Cardiac septum (tissue), 1 donor: ENCODE measurements at regions of chr17 and their contacts with region 1.

Region 1: DNA sequence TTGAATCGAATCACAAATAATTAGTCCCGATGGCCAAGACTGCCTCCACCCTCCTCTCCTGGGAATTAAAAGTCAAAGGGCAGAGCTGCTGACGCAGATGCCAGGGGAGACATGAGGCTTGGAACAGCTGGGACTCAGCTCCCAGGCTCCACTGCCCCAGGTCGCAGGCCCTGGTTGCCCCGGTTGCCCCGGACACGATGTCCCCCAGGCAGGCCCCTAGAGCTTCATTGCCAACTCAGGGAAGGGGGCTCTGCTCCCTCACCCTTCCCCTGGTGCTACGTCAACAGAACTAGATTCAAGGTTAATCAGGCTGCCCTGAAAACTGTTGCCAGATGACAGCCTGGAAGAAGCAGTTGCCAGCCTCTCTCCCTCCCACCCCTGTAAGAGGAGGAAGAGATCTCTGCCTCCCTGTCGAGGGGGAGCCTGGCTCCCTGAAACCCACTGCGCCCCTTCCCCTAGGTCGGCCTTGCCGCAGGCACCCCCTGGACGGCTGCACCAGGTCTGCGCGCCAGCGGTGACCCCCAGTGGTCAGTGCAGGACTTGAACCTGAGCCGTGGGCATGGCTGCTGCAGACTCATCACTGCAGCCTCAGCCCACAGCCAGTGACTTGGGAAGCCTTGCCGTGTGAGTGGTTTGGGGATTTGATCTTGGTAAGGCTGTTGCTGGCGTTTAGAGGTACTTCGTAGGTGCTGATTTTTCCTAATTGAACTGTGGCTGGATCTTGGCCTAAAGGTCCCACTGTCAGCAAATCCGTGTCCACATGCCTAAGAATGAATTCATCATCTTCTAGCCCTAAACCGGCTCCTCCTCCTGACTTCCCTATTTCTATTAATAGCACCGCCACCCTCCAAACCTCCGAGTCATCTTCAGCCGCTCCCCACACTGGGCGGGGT is 84.1 kb upstream of the TOB1 start:
- DNase-seq: peak; percentile 91

Region 2: GRCh38 chr17:50853015-50853615 is 97.1 kb before region 1 on chr17:
- intact Hi-C with region 1: loop called (anchors 2 kb)
- DNase-seq: no peak

Region 3: DNA sequence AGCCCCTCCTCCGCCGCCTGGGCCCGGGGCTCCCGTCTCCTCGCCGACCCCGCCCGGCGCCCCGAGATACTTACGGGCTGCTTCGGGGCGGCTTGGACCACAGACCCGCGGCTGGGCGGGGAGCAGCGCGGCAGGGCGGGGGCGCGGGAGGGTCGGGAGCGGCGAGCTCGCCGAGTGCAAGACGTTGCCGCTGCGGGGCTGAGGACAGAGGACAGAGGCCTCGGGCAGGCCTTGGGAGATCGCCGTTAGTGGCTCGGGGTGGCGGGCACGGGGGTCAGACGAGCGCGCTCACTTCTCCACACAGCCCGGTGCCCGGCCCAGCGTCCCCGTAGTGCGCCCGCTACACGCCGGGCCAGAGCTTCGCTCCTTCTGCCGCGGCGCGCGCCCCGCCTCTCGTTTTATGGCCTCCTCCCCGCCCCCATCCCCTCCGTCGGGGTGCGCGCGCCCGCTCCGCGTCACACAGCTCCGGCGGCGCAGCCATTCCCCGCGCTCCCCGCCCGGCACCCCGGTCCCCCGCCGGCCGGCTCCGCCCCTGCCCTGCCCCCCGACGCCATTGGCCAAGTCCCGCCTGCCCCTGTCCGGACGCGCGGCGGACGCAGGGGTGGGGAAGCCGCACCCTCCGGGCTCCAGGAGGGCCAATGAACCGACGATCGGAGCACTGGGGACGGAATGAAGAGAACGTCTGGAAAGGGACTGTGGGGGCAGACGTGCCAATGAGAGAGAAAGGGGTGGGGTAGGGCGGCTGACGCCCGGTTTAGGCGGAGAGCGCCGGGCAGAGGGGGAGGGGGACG is 84.1 kb before region 1 on chr17 and contains the start of gene TOB1:
- intact Hi-C with region 1: loop called (anchors 2 kb)
- DNase-seq: peak; percentile 99
- total RNA-seq, gene TOB1: 71.1 TPM

Region 4: GRCh38 chr17:51015145-51015558 is 64.9 kb after region 1 on chr17:
- intact Hi-C with region 1: no loop called
- DNase-seq: no peak

Region 5: DNA sequence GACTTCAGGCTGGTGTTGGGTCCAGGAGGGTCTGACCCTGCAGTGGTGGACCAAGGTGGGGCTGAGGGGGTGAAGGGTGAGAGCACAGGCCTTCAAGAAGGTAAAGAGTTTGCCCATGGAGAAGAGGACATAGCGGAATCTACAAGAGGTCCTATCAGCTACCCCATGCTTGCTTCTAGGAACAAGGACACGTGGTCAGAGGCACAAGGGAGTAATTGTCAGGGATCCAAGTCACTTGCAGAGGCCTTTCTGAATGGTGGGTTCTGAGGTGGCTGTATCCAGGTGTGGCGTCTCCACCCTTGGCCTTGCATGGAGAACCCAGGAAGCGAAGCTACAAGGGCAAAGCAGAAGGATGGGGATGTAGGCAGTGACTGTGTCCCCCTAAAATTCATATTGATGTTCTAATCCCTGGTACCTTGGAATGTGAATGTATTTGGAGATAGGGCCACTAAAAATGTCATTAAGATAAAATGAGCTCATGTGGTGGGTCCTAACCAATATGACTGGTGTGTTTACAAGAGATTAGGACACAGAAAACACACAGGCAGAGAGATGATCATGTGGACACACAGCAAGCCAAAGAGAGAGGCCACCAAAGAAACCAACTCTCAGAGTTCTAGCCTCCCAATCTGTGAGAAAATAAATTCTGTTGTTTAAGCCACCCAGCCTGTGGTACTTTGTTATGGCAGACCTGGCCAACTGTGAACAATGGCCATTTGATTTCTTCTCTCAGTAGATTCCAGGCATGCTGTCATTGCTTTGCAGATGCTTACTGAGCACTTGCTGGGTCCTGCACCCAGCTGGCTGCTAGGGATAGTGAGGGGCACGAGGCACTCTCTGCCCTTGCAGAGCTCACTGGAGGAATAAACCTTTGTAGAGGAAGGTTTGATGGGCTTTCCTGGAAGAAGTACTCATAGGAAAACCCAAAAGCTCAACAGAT is 385.9 kb after region 1 on chr17:
- intact Hi-C with region 1: no loop called
- DNase-seq: no peak